ENCODE measurements at regions of chr1 and their contacts with region 1.

Region 1: GRCh38 chr1:239483391-239483790 is 97.0 kb downstream of the CHRM3 start:
- DNase-seq: no peak
- ATAC-seq: no peak
- H3K4me3 ChIP-seq: no peak overlapping the region
- H3K27ac ChIP-seq: no peak overlapping the region
- H3K4me1 ChIP-seq: peaks cover 26% of the 10 kb centered on the region
- H3K27me3 ChIP-seq: no peaks in the 10 kb centered on the region
- CTCF ChIP-seq: no peak

Region 2: GRCh38 chr1:239448911-239449310 is 34.5 kb before region 1 on chr1:
- CTCF ChIA-PET with region 1: no interaction called
- POLR2A ChIA-PET with region 1: no interaction called
- intact Hi-C with region 1: loop called (anchors 5 kb)
- DNase-seq: no peak
- ATAC-seq: peak; percentile 12; the same call in 1 of the 2 replicates
- H3K4me3 ChIP-seq: no peak overlapping the region
- H3K27ac ChIP-seq: no peak overlapping the region
- H3K4me1 ChIP-seq: peaks cover 28% of the 10 kb centered on the region
- H3K27me3 ChIP-seq: no peaks in the 10 kb centered on the region
- CTCF ChIP-seq: no peak

Region 3: DNA sequence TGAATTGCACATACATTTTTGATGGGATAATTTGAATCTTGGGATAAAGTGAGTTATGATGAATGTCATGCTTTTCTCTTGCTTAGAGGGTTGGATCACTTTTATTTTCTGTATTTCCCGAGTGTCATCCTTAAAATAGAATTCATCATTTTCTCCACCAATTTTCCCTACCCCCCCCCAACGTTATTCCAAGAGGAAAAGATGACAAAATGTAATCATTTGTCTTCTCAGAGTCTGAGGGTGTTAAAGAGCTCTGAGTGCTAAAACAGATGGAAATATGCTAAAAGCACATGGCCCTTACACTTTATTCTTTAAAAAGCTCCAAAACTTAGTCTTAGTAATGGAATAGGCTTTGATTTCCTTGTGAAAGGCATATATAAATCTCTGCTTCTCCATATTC is 15.7 kb before region 1 on chr1:
- CTCF ChIA-PET with region 1: no interaction called
- POLR2A ChIA-PET with region 1: interaction called, 42 read pairs
- intact Hi-C with region 1: no loop called
- DNase-seq: no peak
- ATAC-seq: no peak
- H3K4me3 ChIP-seq: no peak overlapping the region
- H3K27ac ChIP-seq: no peak overlapping the region
- H3K4me1 ChIP-seq: no peaks in the 10 kb centered on the region
- H3K27me3 ChIP-seq: no peaks in the 10 kb centered on the region
- CTCF ChIP-seq: no peak

Region 4: DNA sequence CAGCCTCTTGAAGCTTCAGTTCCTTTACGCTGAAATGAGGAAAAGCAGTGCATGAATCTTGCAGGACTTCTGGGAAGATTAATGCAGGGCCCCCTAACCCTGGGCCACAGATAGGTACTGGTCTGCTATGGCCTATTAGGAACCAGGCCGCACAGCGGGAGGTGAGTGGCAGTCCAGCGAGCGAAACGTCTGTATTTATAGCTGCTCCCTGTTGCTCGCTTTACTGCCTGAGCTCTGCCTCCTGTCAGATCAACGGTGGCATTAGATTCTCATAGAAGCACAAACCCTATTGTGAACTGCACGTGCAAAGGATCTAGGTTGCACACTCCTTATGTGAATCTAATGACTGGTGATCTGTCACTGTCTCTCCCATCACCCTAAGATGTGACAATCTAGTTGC is 33.2 kb after region 1 on chr1:
- CTCF ChIA-PET with region 1: no interaction called
- POLR2A ChIA-PET with region 1: no interaction called
- intact Hi-C with region 1: no loop called
- DNase-seq: no peak
- ATAC-seq: no peak
- H3K4me3 ChIP-seq: no peak overlapping the region
- H3K27ac ChIP-seq: no peak overlapping the region
- H3K4me1 ChIP-seq: no peaks in the 10 kb centered on the region
- H3K27me3 ChIP-seq: no peaks in the 10 kb centered on the region
- CTCF ChIP-seq: no peak